Dorsolateral prefrontal cortex (tissue), 120 donors: ENCODE measurements at regions of chr10 and their contacts with region 1.

Region 1: DNA sequence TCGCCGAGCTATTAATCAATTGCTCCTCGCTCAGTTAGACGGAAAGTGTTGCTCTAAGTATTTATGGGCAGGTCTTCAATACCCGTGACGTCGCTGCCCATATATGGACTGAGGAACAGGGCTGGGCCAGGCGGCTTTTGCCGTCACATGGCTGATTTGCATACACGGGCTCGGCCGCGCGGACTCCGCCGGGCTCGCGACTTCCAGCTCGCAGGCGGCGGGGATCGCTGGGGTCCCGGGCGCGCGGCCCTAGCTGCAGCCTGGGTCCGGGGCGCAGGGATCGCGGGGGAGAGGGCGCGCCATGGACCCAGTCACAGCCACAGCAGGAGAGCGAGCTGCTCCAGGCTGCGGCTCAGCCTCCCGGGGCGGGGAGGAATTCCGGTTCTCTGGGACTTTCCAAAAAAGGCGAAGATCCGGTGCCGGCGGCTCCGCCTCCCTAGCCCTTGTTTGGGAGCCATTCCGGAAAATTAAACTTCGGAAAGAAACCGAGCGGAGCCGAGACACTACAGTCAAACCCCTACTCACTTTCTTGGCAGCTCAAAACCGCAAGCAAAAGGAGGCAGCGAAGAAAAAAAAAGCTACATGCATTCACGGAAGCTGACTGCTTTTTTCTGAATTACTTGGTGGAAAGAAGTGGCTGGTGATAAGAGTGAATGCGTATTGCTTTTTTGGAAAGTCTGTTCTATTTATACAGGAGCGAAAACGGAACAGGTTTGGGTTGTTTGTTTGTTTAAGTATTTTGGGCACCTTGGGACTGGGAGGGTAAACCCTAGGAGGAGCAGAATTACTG is at the start of gene EGR2:
- DNase-seq: peak; percentile 80 to 96 (median 94)
- H3K4me3 ChIP-seq: peak within 1 kb of the TSS; percentile 57 to 99 (median 82)
- H3K27ac ChIP-seq: peak within 1 kb of the TSS in 57 of 59 donors; percentile 43 to 91 (median 82)
- H3K27me3 ChIP-seq: peaks cover 0 to 25% (median 12%) of the 10 kb centered on the region in 45 donors
- CTCF ChIP-seq: peak in 16 of 56 donors; percentile 4 to 48 (median 15)
- total RNA-seq, gene EGR2: 0.17 to 25.9 (median 1.5) TPM

Region 2: DNA sequence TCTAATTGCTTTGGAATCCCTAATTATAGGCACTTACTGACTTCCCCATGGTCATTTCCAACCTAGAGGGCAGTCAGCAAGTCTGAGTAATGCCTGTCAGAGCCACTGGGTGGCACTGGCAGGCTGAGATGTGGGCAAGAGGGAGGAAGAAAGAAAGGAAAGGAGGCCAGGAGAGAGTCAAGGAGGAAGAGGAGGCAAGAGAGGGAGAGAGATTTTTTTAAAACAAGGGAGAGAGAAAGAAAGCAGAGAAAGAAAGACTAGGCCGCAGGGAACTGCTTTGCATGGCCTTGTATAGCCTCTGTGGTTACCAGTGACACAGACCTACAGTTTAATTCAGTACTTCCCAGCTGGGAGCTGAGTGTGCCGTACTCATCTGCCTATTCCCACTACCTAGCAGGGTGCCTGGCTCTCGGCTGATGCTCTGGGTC is 222.4 kb before region 1 on chr10:
- intact Hi-C with region 1: loop called (anchors 5 kb)
- DNase-seq: peak in 9 of 10 donors; percentile 19 to 76 (median 46)
- H3K4me3 ChIP-seq: no peak overlapping the region
- H3K27ac ChIP-seq: no peak overlapping the region
- H3K27me3 ChIP-seq: no peaks in the 10 kb centered on the region
- CTCF ChIP-seq: peak; percentile 52 to 96 (median 85)

Region 3: GRCh38 chr10:62804356-62805230 is 11.9 kb before region 1 on chr10 and contains the start of gene ADO:
- intact Hi-C with region 1: loop called (anchors 1 kb)
- DNase-seq: peak; percentile 89 to 95 (median 92)
- H3K4me3 ChIP-seq: peak within 1 kb of the TSS; percentile 73 to 98 (median 89)
- H3K27ac ChIP-seq: peak within 1 kb of the TSS; percentile 95 to 100 (median 99)
- H3K27me3 ChIP-seq: no peaks in the 10 kb centered on the region
- CTCF ChIP-seq: peak in 22 of 56 donors; percentile 5 to 43 (median 16)
- total RNA-seq, gene ADO: 21.1 to 44.3 (median 32.3) TPM

Region 4: DNA sequence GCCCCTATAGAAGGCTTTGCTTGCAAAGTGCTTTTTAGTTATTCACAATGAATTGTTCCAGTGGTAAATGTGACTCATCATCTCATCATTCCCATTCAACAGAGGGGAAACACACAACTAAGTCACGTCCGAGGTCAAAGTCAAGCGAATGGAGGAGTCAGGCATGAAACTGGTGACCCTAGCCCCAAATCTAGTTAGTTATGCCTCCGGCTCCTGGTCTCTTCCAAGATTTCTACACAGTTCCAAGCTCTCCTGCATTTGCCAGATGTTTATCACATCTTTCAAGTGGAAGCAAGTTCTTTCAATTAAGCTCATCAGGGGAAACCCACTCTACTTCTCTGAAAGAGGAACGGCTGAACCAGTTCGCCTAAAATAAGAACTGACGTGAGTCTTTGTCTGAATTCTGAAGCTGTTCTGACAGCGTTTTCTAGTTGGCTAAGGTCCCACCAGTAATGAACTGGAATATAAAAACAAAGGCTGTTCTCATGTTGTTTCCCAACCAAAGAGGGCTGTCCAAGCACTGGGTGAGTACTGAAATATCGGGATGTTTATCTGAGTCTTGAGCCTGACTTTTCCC is 175.7 kb after region 1 on chr10:
- intact Hi-C with region 1: loop called in 1 of 2 experiments (anchors 5 kb)
- DNase-seq: no peak
- H3K4me3 ChIP-seq: peak overlapping the region in 16 of 59 donors; percentile 1 to 47 (median 18)
- H3K27ac ChIP-seq: peak overlapping the region in 2 of 59 donors; percentile 16 to 21
- H3K27me3 ChIP-seq: peaks cover 0 to 14% (median 0%) of the 10 kb centered on the region in 45 donors
- CTCF ChIP-seq: no peak

Region 5: DNA sequence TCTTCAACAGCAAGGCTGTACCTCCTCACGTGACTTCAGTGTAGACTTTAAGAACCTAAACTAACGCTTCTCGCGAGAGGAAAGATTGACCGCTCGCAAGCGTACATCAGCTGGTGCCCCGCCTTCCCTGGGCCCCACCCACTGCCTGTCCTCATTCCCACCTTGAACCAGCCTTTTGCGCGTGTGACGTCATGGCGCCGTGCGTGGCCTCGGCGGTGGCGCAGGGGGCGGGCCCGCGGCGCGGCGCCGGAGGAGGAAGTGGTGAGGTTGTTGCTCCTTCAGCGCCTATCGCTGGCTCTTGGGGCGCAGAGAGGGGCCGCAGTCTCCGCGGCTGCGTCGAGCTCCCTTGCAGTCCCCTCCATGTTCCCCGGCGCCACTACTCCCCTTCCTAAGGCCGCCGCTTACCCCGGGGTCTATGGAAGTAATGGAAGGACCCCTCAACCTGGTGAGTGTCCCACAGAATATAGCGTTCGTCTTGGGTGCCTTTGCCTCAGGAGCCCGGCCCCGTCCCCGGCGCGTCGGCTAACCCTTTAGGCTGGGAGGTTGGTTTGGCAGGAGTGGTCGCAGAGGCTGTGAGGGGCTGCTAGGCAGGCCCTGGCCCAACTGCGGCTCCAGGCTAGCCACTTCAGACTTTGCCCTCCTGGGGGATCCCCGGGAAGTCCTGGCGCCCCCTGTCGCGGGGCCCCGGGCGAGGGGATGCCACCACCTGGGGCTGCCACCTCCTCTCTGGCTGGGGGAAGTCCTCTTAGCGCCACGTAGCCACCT is 316.7 kb after region 1 on chr10 and contains the start of gene NRBF2:
- intact Hi-C with region 1: loop called in 1 of 2 experiments (anchors 5 kb)
- DNase-seq: peak; percentile 87 to 97 (median 96)
- H3K4me3 ChIP-seq: peak within 1 kb of the TSS; percentile 68 to 99 (median 92)
- H3K27ac ChIP-seq: peak within 1 kb of the TSS; percentile 50 to 95 (median 86)
- H3K27me3 ChIP-seq: no peaks in the 10 kb centered on the region
- CTCF ChIP-seq: peak in 25 of 56 donors; percentile 1 to 42 (median 19)
- total RNA-seq, gene NRBF2: 8.6 to 26.3 (median 19.6) TPM